CD4-positive, alpha-beta memory T cell (primary cell): ENCODE measurements at regions of chr6 and their contacts with region 1.

Region 1: DNA sequence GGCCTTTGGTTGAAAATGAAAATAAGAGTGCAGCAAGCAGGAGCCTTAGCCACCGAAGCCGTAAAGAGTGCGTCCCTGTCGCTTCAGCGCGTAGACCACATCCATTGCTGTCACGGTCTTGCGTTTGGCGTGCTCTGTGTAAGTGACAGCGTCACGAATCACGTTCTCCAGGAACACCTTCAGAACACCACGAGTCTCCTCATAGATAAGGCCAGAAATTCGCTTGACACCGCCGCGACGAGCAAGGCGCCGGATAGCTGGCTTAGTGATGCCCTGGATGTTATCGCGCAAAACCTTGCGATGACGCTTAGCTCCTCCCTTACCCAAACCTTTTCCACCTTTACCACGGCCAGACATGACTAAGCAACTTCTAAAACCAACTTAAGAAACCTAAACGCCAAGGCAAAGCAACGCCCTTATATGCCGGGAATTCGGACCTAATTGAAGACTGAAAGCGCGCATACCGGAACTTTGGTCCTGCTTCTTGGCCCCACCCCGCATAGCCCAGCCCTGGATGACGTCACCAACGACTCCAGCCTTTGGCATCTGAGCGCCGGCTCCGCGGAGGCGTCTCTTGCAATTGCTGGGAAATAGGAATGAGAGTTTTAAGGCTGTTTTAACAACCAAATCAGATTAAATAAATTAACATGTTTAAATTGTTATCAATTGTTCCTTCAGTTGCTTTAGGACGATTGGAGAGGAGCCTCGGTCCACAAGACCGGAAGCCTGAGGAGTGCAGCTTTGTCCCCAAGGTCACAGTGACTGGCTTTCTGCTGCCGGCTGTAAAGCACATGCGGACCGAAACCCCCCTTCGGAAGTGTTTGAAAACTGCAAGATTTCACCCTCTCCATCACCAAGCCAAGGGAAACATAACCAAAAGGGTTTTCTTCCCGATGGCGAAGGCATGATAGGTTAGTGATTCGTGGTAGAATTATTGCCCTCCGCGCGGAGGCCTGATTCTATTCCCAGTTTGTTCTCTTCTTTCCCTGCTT is 79.6 kb upstream of the BTN3A2 start:
- DNase-seq: peak; percentile 91 to 98 (median 95)
- H3K4me3 ChIP-seq: peak overlapping the region; percentile 51 to 75
- H3K4me3 Mint-ChIP-seq: peak overlapping the region; percentile 83 to 95 (median 91)
- H3K27ac ChIP-seq: peak overlapping the region; percentile 81
- H3K27ac Mint-ChIP-seq: peak overlapping the region; percentile 95 to 99 (median 99)
- H3K4me1 ChIP-seq: peaks cover 13% of the 10 kb centered on the region
- H3K4me1 Mint-ChIP-seq: peaks cover 8 to 34% (median 19%) of the 10 kb centered on the region in 4 donors
- H3K27me3 ChIP-seq: no peaks in the 10 kb centered on the region
- H3K27me3 Mint-ChIP-seq: peaks cover 2 to 9% of the 10 kb centered on the region in 2 donors

Region 2: DNA sequence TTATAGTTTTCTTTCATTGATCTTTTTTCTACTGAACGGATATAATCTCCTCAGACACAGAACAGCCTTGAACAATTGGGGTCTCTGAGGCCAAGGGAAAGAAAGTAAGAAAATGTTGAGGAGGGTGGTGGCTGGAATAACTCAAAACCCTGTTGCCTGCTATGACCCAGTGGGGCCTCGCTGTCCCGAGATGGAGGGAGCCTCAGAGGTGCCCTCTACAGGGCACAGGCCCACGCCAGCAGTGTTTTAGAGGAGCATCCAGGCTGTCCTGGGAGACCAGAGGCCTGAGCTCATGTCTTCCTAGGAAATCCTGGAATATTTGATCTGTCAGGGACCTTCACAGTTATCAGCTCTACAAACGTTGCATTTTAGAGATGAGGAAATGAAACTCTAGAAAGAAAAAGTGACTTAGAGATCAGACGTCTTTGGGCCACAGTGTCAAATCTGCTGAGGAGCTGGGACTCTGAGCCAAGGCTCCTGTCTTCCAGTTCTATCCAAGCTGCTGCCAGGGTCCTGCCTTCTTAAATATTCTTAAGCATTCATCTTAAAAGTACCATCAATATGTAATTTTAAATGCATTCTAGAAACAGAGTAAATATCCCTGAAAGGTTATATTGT is 1764.4 kb before region 1 on chr6:
- CTCF ChIA-PET with region 1: no interaction called
- POLR2A ChIA-PET with region 1: no interaction called
- intact Hi-C with region 1: no loop called
- DNase-seq: peak in 3 of 5 donors; percentile 10 to 13 (median 13)
- H3K4me3 ChIP-seq: no peak overlapping the region
- H3K4me3 Mint-ChIP-seq: no peak overlapping the region
- H3K27ac ChIP-seq: no peak overlapping the region
- H3K27ac Mint-ChIP-seq: no peak overlapping the region
- H3K4me1 ChIP-seq: no peaks in the 10 kb centered on the region
- H3K4me1 Mint-ChIP-seq: no peaks in the 10 kb centered on the region
- H3K27me3 ChIP-seq: no peaks in the 10 kb centered on the region
- H3K27me3 Mint-ChIP-seq: no peaks in the 10 kb centered on the region

Region 3: GRCh38 chr6:25944688-25945574 is 340.5 kb before region 1 on chr6:
- CTCF ChIA-PET with region 1: no interaction called
- POLR2A ChIA-PET with region 1: no interaction called
- intact Hi-C with region 1: no loop called
- DNase-seq: no peak
- H3K4me3 ChIP-seq: no peak overlapping the region
- H3K4me3 Mint-ChIP-seq: no peak overlapping the region
- H3K27ac ChIP-seq: no peak overlapping the region
- H3K27ac Mint-ChIP-seq: no peak overlapping the region
- H3K4me1 ChIP-seq: peaks cover 9% of the 10 kb centered on the region
- H3K4me1 Mint-ChIP-seq: peaks cover 11 to 23% (median 17%) of the 10 kb centered on the region in 4 donors
- H3K27me3 ChIP-seq: no peaks in the 10 kb centered on the region
- H3K27me3 Mint-ChIP-seq: peaks cover 0 to 2% of the 10 kb centered on the region in 2 donors

Region 4: GRCh38 chr6:26031595-26032339 is 253.7 kb before region 1 on chr6:
- CTCF ChIA-PET with region 1: no interaction called
- POLR2A ChIA-PET with region 1: interaction called, 15 read pairs
- intact Hi-C with region 1: no loop called
- DNase-seq: peak; percentile 86 to 94 (median 89)
- H3K4me3 ChIP-seq: peak overlapping the region; percentile 53 to 67
- H3K4me3 Mint-ChIP-seq: peak overlapping the region; percentile 91 to 99 (median 94)
- H3K27ac ChIP-seq: peak overlapping the region; percentile 71
- H3K27ac Mint-ChIP-seq: peak overlapping the region; percentile 89 to 98 (median 96)
- H3K4me1 ChIP-seq: peaks cover 35% of the 10 kb centered on the region
- H3K4me1 Mint-ChIP-seq: peaks cover 33 to 54% (median 44%) of the 10 kb centered on the region in 4 donors
- H3K27me3 ChIP-seq: no peaks in the 10 kb centered on the region
- H3K27me3 Mint-ChIP-seq: peaks cover 0 to 3% of the 10 kb centered on the region in 2 donors

Region 5: GRCh38 chr6:26183581-26184366 is 101.7 kb before region 1 on chr6:
- CTCF ChIA-PET with region 1: interaction called, 7 read pairs
- POLR2A ChIA-PET with region 1: interaction called, 57 read pairs
- intact Hi-C with region 1: loop called (anchors 2 kb)
- DNase-seq: peak; percentile 72 to 81 (median 79)
- H3K4me3 ChIP-seq: peak overlapping the region; percentile 2 to 69
- H3K4me3 Mint-ChIP-seq: peak overlapping the region; percentile 90 to 100 (median 96)
- H3K27ac ChIP-seq: peak overlapping the region; percentile 67
- H3K27ac Mint-ChIP-seq: peak overlapping the region; percentile 78 to 99 (median 95)
- H3K4me1 ChIP-seq: peaks cover 45% of the 10 kb centered on the region
- H3K4me1 Mint-ChIP-seq: peaks cover 29 to 54% (median 37%) of the 10 kb centered on the region in 4 donors
- H3K27me3 ChIP-seq: no peaks in the 10 kb centered on the region
- H3K27me3 Mint-ChIP-seq: no peaks in the 10 kb centered on the region

Region 6: DNA sequence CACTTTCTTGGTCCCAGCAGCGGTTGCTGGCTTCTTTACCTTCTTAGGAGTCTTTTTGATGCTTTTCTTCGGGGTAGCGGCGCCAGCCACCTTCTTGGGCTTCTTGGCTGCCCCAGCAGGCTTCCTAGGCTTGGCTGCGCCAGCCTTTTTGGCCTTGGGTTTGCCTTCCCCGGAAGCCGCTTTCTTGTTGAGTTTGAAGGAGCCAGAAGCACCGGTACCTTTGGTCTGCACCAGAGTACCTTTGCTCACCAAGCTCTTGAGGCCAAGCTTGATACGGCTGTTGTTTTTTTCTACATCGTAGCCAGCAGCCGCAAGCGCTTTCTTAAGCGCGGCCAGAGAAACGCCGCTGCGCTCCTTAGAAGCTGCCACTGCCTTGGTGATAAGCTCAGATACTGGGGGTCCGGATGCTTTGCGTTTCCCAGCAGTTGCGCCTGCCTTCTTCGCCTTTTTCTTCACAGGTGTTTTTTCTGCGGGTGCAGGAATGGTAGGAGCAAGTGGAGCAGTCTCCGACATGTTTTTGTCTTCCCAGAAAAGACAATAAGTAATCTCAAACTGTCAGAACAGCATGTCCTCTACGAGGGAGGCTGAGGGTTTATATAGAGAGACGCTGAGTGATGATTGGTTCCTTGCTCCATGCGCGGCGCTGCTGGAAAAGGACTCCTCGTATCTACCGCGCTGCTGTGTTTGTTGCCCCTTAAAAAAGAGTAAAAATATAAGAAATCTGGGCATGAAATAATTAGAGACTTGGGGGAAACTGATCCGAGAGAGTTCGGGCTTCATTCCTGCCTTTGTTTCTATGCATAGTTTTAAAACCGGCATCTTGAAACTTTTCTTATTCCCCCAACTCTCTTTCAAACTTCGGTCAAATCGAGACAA is 50.8 kb before region 1 on chr6:
- CTCF ChIA-PET with region 1: interaction called, 5 read pairs
- POLR2A ChIA-PET with region 1: interaction called, 127 read pairs
- intact Hi-C with region 1: loop called (anchors 1 kb)
- DNase-seq: peak; percentile 70 to 87 (median 85)
- H3K4me3 ChIP-seq: peak overlapping the region; percentile 66 to 95
- H3K4me3 Mint-ChIP-seq: peak overlapping the region; percentile 93 to 99 (median 96)
- H3K27ac ChIP-seq: peak overlapping the region; percentile 83
- H3K27ac Mint-ChIP-seq: peak overlapping the region; percentile 90 to 99 (median 96)
- H3K4me1 ChIP-seq: peaks cover 23% of the 10 kb centered on the region
- H3K4me1 Mint-ChIP-seq: peaks cover 18 to 43% (median 26%) of the 10 kb centered on the region in 4 donors
- H3K27me3 ChIP-seq: no peaks in the 10 kb centered on the region
- H3K27me3 Mint-ChIP-seq: no peaks in the 10 kb centered on the region

Region 7: GRCh38 chr6:26312501-26313390 is 27.3 kb after region 1 on chr6:
- CTCF ChIA-PET with region 1: no interaction called
- POLR2A ChIA-PET with region 1: interaction called, 18 read pairs
- intact Hi-C with region 1: loop called (anchors 1 kb)
- DNase-seq: peak; percentile 84 to 88 (median 85)
- H3K4me3 ChIP-seq: peak overlapping the region; percentile 31 to 73
- H3K4me3 Mint-ChIP-seq: peak overlapping the region; percentile 81 to 95 (median 92)
- H3K27ac ChIP-seq: peak overlapping the region; percentile 56
- H3K27ac Mint-ChIP-seq: peak overlapping the region; percentile 92 to 99 (median 96)
- H3K4me1 ChIP-seq: peaks cover 29% of the 10 kb centered on the region
- H3K4me1 Mint-ChIP-seq: peaks cover 29 to 54% (median 39%) of the 10 kb centered on the region in 4 donors
- H3K27me3 ChIP-seq: no peaks in the 10 kb centered on the region
- H3K27me3 Mint-ChIP-seq: peaks cover 0 to 8% of the 10 kb centered on the region in 2 donors

Region 8: GRCh38 chr6:26507658-26508057 is 222.2 kb after region 1 on chr6:
- CTCF ChIA-PET with region 1: no interaction called
- POLR2A ChIA-PET with region 1: no interaction called
- intact Hi-C with region 1: no loop called
- DNase-seq: no peak
- H3K4me3 ChIP-seq: no peak overlapping the region
- H3K4me3 Mint-ChIP-seq: no peak overlapping the region
- H3K27ac ChIP-seq: no peak overlapping the region
- H3K27ac Mint-ChIP-seq: no peak overlapping the region
- H3K4me1 ChIP-seq: no peaks in the 10 kb centered on the region
- H3K4me1 Mint-ChIP-seq: no peaks in the 10 kb centered on the region
- H3K27me3 ChIP-seq: peaks cover 6% of the 10 kb centered on the region
- H3K27me3 Mint-ChIP-seq: peaks cover 4 to 6% of the 10 kb centered on the region in 2 donors

Region 9: DNA sequence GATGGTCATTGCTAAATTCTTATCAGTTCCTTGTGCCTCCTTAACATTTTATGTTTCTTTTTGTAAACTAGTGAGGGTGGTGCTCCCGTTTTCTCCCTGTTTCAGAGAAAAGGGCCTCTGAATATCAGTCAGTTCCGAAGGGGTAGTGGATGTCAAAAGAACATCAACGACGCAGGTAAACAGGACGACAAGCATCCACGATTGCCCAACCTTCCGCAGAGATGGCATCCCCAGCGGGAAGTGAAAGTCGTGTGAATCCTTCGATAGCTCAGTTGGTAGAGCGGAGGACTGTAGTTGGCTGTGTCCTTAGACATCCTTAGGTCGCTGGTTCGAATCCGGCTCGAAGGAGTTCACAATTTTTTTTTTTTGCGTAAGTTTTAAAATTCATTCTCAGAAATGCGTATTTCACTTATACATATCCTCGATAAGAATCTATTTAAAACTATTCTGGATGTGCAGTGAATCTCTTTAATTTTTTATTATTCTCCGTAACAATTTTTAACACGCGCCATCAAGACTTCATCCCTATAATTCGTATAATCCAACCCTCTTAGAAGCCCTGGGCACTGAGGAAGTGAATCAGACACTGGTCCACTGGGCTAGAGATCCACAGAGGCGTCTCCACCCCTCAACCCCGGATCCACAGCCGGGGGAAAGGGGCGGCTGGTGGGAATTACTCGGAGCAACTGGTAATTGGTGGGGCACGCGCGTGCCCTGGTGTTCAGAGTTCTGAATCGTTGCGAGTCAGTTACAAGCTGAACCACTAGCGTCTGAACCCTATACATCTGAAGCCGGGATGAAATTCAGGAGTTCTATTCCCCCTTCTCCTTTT is 283.4 kb after region 1 on chr6:
- CTCF ChIA-PET with region 1: interaction called, 8 read pairs
- POLR2A ChIA-PET with region 1: interaction called, 21 read pairs
- intact Hi-C with region 1: no loop called
- DNase-seq: peak; percentile 96 to 98 (median 97)
- H3K4me3 ChIP-seq: peak overlapping the region; percentile 74 to 82
- H3K4me3 Mint-ChIP-seq: peak overlapping the region; percentile 94 to 99 (median 96)
- H3K27ac ChIP-seq: peak overlapping the region; percentile 62
- H3K27ac Mint-ChIP-seq: peak overlapping the region; percentile 92 to 100 (median 98)
- H3K4me1 ChIP-seq: peaks cover 9% of the 10 kb centered on the region
- H3K4me1 Mint-ChIP-seq: peaks cover 17 to 34% (median 23%) of the 10 kb centered on the region in 4 donors
- H3K27me3 ChIP-seq: no peaks in the 10 kb centered on the region
- H3K27me3 Mint-ChIP-seq: peaks cover 0 to 10% of the 10 kb centered on the region in 2 donors

Region 10: GRCh38 chr6:27838058-27838944 is 1552.9 kb after region 1 on chr6:
- CTCF ChIA-PET with region 1: no interaction called
- POLR2A ChIA-PET with region 1: interaction called, 19 read pairs
- intact Hi-C with region 1: loop called (anchors 10 kb)
- DNase-seq: peak; percentile 91 to 94 (median 92)
- H3K4me3 ChIP-seq: peak overlapping the region; percentile 63 to 67
- H3K4me3 Mint-ChIP-seq: no peak overlapping the region
- H3K27ac ChIP-seq: peak overlapping the region; percentile 93
- H3K27ac Mint-ChIP-seq: no peak overlapping the region
- H3K4me1 ChIP-seq: peaks cover 30% of the 10 kb centered on the region
- H3K4me1 Mint-ChIP-seq: peaks cover 6 to 20% (median 12%) of the 10 kb centered on the region in 4 donors
- H3K27me3 ChIP-seq: no peaks in the 10 kb centered on the region
- H3K27me3 Mint-ChIP-seq: peaks cover 2 to 3% of the 10 kb centered on the region in 2 donors